ENCODE measurements at regions of chr4 and their contacts with region 1.

Region 1: DNA sequence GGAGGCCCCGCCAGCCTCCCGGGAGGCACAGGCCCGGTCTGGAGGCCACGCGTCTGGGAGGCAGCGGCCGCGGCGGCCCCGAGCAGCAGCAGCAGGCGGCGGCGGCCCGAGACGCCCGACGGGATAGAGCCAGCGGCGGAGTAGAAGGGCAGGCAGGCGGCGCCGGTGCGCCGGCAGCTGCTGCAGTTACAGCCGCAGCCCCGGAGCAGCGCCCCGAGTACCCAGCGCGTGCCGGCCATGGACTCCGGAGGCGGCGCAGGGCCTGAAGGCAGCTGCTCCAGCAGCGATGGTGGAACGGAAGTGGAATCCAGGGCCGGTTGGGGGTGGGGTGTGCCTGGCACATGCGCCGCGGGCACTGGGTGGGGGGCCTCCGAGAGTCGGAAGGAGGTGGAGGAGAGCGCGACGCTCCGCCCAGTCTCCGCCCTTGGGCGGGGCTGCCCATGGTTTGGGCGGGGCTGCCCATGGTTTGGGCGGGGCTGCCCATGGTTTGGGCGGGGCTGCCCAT is at the start of gene GRSF1:
- H3K4me3 Mint-ChIP-seq: peak within 1 kb of the TSS; percentile 87
- H3K27ac Mint-ChIP-seq: peak within 1 kb of the TSS; percentile 94
- H3K4me1 Mint-ChIP-seq: peaks cover 15% of the 10 kb centered on the region
- H3K27me3 Mint-ChIP-seq: no peaks in the 10 kb centered on the region

Region 2: GRCh38 chr4:70687821-70688794 is 151.5 kb before region 1 on chr4 and contains the start of gene UTP3:
- intact Hi-C with region 1: loop called (anchors 2 kb)
- H3K4me3 Mint-ChIP-seq: peak within 1 kb of the TSS; percentile 93
- H3K27ac Mint-ChIP-seq: peak within 1 kb of the TSS; percentile 99
- H3K4me1 Mint-ChIP-seq: peaks cover 33% of the 10 kb centered on the region
- H3K27me3 Mint-ChIP-seq: no peaks in the 10 kb centered on the region

Region 3: GRCh38 chr4:70778888-70779422 is 60.7 kb before region 1 on chr4:
- intact Hi-C with region 1: loop called (anchors 10 kb)
- H3K4me3 Mint-ChIP-seq: no peak overlapping the region
- H3K27ac Mint-ChIP-seq: no peak overlapping the region
- H3K4me1 Mint-ChIP-seq: no peaks in the 10 kb centered on the region
- H3K27me3 Mint-ChIP-seq: no peaks in the 10 kb centered on the region

Region 4: DNA sequence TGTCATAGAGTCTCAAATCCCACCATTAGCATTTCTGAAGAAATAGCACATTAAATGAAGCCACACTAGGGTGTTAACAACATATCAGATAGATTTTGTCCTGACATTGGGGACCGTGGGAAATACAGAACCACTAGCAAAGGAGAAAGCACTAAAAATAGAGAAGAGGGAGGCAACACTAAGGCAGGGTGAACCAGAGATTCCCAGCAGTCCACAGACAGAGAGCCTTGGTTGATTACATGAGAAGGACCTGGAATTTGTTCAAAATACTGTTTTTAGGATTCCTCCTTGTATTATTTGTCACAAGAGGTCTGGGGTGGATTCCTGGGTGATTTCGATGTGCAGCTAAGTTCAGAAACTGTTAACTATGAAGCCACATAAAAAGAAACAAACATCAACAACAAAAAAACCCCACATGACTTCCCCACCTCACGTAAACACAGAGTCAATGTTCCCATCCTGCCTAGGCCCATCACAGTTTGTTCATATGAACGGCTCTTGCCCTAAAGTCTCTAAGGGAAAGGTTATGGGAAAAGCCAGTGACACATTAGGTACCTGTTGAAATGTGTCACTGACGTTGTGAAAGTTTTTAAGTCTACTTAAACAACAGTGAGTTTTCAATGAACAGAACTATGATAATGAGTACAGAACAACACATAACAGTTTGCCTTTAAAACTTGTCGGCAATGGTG is 23.6 kb after region 1 on chr4:
- intact Hi-C with region 1: no loop called
- H3K4me3 Mint-ChIP-seq: no peak overlapping the region
- H3K27ac Mint-ChIP-seq: no peak overlapping the region
- H3K4me1 Mint-ChIP-seq: peaks cover 5% of the 10 kb centered on the region
- H3K27me3 Mint-ChIP-seq: no peaks in the 10 kb centered on the region

Region 5: GRCh38 chr4:70943114-70943513 is 103.5 kb after region 1 on chr4:
- intact Hi-C with region 1: loop called (anchors 2 kb)
- H3K4me3 Mint-ChIP-seq: no peak overlapping the region
- H3K27ac Mint-ChIP-seq: peak overlapping the region; percentile 80
- H3K4me1 Mint-ChIP-seq: peaks cover 50% of the 10 kb centered on the region
- H3K27me3 Mint-ChIP-seq: no peaks in the 10 kb centered on the region

Region 6: GRCh38 chr4:71009890-71010588 is 170.4 kb after region 1 on chr4:
- intact Hi-C with region 1: loop called (anchors 5 kb)
- H3K4me3 Mint-ChIP-seq: no peak overlapping the region
- H3K27ac Mint-ChIP-seq: no peak overlapping the region
- H3K4me1 Mint-ChIP-seq: peaks cover 43% of the 10 kb centered on the region
- H3K27me3 Mint-ChIP-seq: no peaks in the 10 kb centered on the region

Measured in dendritic cell treated with granulocyte-macrophage colony-stimulating factor and Interleukin-4, amounts not matched to agents 40 ng/mL and 50 ng/mL, for 4 days (primary cell).